ENCODE measurements at regions of chr5 and their contacts with region 1.

Region 1: GRCh38 chr5:81425569-81425968 is 31.6 kb upstream of the ACOT12 start:
- DNase-seq: no peak
- H3K4me3 ChIP-seq: no peak overlapping the region
- H3K27ac ChIP-seq: peak overlapping the region in 3 of 4 donors; percentile 9 to 32 (median 22)
- H3K4me1 ChIP-seq: peaks cover 0 to 15% (median 6%) of the 10 kb centered on the region in 4 donors
- H3K27me3 ChIP-seq: no peaks in the 10 kb centered on the region
- CTCF ChIP-seq: peak; percentile 57 to 66 (median 62)
- EP300 ChIP-seq: no peak
- POLR2A ChIP-seq: no peak

Region 2: GRCh38 chr5:81363093-81364080 is 62.2 kb before region 1 on chr5:
- in situ Hi-C with region 1: no loop called
- intact Hi-C with region 1: no loop called
- DNase-seq: peak; percentile 14
- H3K4me3 ChIP-seq: no peak overlapping the region
- H3K27ac ChIP-seq: no peak overlapping the region
- H3K4me1 ChIP-seq: peaks cover 0 to 23% (median 0%) of the 10 kb centered on the region in 4 donors
- H3K27me3 ChIP-seq: no peaks in the 10 kb centered on the region
- CTCF ChIP-seq: no peak
- EP300 ChIP-seq: no peak
- POLR2A ChIP-seq: no peak

Region 3: GRCh38 chr5:82225525-82226172 is 800.1 kb after region 1 on chr5:
- in situ Hi-C with region 1: loop called in 1 of 4 experiments (anchors 5 kb)
- intact Hi-C with region 1: no loop called
- DNase-seq: peak; percentile 59
- H3K4me3 ChIP-seq: no peak overlapping the region
- H3K27ac ChIP-seq: no peak overlapping the region
- H3K4me1 ChIP-seq: peaks cover 0 to 3% (median 0%) of the 10 kb centered on the region in 4 donors
- H3K27me3 ChIP-seq: no peaks in the 10 kb centered on the region
- CTCF ChIP-seq: peak; percentile 72 to 85 (median 83)
- EP300 ChIP-seq: no peak
- POLR2A ChIP-seq: no peak